Dendritic cell treated with granulocyte-macrophage colony-stimulating factor and Interleukin-4, amounts not matched to agents 40 ng/mL and 50 ng/mL, for 4 days (primary cell): ENCODE measurements at regions of chr2 and their contacts with region 1.

Region 1: GRCh38 chr2:16773080-16773713 is 107.6 kb upstream of the CYRIA start:
- H3K4me3 Mint-ChIP-seq: no peak overlapping the region
- H3K27ac Mint-ChIP-seq: no peak overlapping the region
- H3K4me1 Mint-ChIP-seq: peaks cover 13% of the 10 kb centered on the region
- H3K27me3 Mint-ChIP-seq: peaks cover 7% of the 10 kb centered on the region

Region 2: GRCh38 chr2:16700551-16701259 is 72.5 kb before region 1 on chr2:
- intact Hi-C with region 1: no loop called
- H3K4me3 Mint-ChIP-seq: peak overlapping the region; percentile 22
- H3K27ac Mint-ChIP-seq: peak overlapping the region; percentile 82
- H3K4me1 Mint-ChIP-seq: peaks cover 11% of the 10 kb centered on the region
- H3K27me3 Mint-ChIP-seq: no peaks in the 10 kb centered on the region

Region 3: GRCh38 chr2:16900405-16901025 is 127.3 kb after region 1 on chr2:
- intact Hi-C with region 1: loop called (anchors 1 kb)
- H3K4me3 Mint-ChIP-seq: no peak overlapping the region
- H3K27ac Mint-ChIP-seq: no peak overlapping the region
- H3K4me1 Mint-ChIP-seq: no peaks in the 10 kb centered on the region
- H3K27me3 Mint-ChIP-seq: no peaks in the 10 kb centered on the region

Region 4: GRCh38 chr2:17148407-17149145 is 375.4 kb after region 1 on chr2:
- intact Hi-C with region 1: loop called (anchors 2 kb)
- H3K4me3 Mint-ChIP-seq: no peak overlapping the region
- H3K27ac Mint-ChIP-seq: no peak overlapping the region
- H3K4me1 Mint-ChIP-seq: no peaks in the 10 kb centered on the region
- H3K27me3 Mint-ChIP-seq: no peaks in the 10 kb centered on the region

Region 5: GRCh38 chr2:17309741-17310339 is 536.6 kb after region 1 on chr2:
- intact Hi-C with region 1: loop called (anchors 1 kb)
- H3K4me3 Mint-ChIP-seq: no peak overlapping the region
- H3K27ac Mint-ChIP-seq: no peak overlapping the region
- H3K4me1 Mint-ChIP-seq: no peaks in the 10 kb centered on the region
- H3K27me3 Mint-ChIP-seq: no peaks in the 10 kb centered on the region

Region 6: GRCh38 chr2:17672583-17673317 is 899.6 kb after region 1 on chr2:
- intact Hi-C with region 1: loop called (anchors 5 kb)
- H3K4me3 Mint-ChIP-seq: no peak overlapping the region
- H3K27ac Mint-ChIP-seq: no peak overlapping the region
- H3K4me1 Mint-ChIP-seq: no peaks in the 10 kb centered on the region
- H3K27me3 Mint-ChIP-seq: no peaks in the 10 kb centered on the region